ENCODE measurements at regions of chr5 and their contacts with region 1.

Region 1: GRCh38 chr5:71651579-71651978 is 64.4 kb downstream of the MCCC2 start:
- DNase-seq: peak; percentile 77
- ATAC-seq: peak; percentile 80
- H3K4me3 Mint-ChIP-seq: no peak overlapping the region
- H3K27ac Mint-ChIP-seq: no peak overlapping the region
- H3K4me1 Mint-ChIP-seq: peaks cover 16% of the 10 kb centered on the region
- H3K27me3 Mint-ChIP-seq: no peaks in the 10 kb centered on the region

Region 2: DNA sequence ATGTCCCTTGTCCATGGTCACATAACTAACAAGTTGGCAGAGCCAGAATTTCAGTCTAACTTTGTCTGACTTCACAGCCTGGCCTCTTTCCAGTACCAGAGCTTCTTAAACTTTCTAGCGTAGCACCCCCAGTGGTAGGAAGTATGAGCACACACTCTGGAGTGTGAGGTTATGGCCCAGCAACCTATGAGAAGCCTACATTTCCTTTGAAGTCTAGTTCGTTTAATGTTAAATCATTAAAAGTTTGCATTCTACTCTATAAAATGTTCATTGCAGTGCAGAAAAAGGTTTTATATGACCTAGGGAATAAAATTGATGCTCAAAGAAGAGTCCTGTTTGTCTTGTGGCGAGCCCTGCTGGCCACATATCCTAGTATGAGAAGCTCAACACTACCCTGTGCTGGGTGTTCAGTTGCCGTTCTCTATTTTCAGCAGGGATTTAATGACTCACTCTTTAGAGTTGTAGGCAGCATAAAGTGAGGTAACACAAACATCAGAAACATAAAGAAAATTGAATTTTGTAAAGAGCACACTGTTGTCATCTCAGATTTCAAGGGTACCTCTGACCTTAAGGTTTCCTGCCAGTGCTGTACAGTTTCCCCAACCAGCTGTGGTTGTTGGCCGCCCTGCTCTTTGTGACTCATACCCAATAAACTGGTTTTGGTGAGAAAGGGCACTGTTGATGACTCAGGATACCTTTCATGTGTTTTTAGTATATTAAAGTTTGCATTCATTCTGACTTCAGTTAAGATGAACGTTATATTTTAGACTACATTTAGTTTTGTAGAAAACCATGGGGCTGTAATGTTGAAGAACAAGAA is 50.1 kb before region 1 on chr5:
- CTCF ChIA-PET with region 1: no interaction called
- POLR2A ChIA-PET with region 1: interaction called, 3 read pairs
- intact Hi-C with region 1: loop called (anchors 1 kb)
- DNase-seq: peak; percentile 87
- ATAC-seq: peak; percentile 92
- H3K4me3 Mint-ChIP-seq: peak overlapping the region; percentile 17
- H3K27ac Mint-ChIP-seq: peak overlapping the region; percentile 93
- H3K4me1 Mint-ChIP-seq: peaks cover 33% of the 10 kb centered on the region
- H3K27me3 Mint-ChIP-seq: no peaks in the 10 kb centered on the region

Measured in activated CD4-positive, alpha-beta T cell treated with anti-CD3 and anti-CD28 coated beads for 36 hours (primary cell).